ENCODE measurements at regions of chr14 and their contacts with region 1.

Region 1: DNA sequence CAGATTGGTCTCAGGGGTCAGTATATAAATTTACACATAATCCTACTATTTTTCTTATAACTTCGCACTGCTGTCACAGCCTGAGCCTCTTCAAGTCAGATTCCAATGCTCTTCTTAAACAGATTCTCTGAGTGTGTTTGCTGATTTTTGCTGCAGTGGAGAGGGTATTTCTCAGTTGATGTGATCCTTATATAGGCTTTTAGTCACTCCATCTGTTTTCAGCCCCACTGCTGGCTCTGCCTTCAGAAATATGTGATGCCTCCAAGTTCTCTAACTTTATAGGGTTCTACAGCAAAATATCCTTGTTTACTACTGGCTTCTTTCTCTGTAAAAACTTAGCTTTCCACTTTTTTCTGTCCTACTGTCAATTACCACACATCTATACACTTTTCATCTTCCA is 702.7 kb downstream of the NRXN3 start:
- DNase-seq: no peak
- H3K4me3 ChIP-seq: no peak overlapping the region
- H3K27ac ChIP-seq: no peak overlapping the region
- H3K27me3 ChIP-seq: no peaks in the 10 kb centered on the region
- CTCF ChIP-seq: no peak

Region 2: GRCh38 chr14:78891263-78891662 is 18.4 kb after region 1 on chr14:
- CTCF ChIA-PET with region 1: no interaction called
- POLR2A ChIA-PET with region 1: no interaction called
- DNase-seq: no peak
- H3K4me3 ChIP-seq: no peak overlapping the region
- H3K27ac ChIP-seq: no peak overlapping the region
- H3K27me3 ChIP-seq: no peaks in the 10 kb centered on the region
- CTCF ChIP-seq: no peak

Region 3: GRCh38 chr14:79016828-79017505 is 144.1 kb after region 1 on chr14:
- CTCF ChIA-PET with region 1: no interaction called
- POLR2A ChIA-PET with region 1: no interaction called
- DNase-seq: peak; percentile 72
- H3K4me3 ChIP-seq: no peak overlapping the region
- H3K27ac ChIP-seq: no peak overlapping the region
- H3K27me3 ChIP-seq: no peaks in the 10 kb centered on the region
- CTCF ChIP-seq: no peak

Region 4: GRCh38 chr14:79044894-79045624 is 172.2 kb after region 1 on chr14:
- CTCF ChIA-PET with region 1: interaction called, 10 read pairs
- POLR2A ChIA-PET with region 1: no interaction called
- DNase-seq: peak; percentile 15
- H3K4me3 ChIP-seq: no peak overlapping the region
- H3K27ac ChIP-seq: no peak overlapping the region
- H3K27me3 ChIP-seq: no peaks in the 10 kb centered on the region
- CTCF ChIP-seq: no peak

Measured in AG04450 (cell line).